ENCODE measurements at regions of chr12 and their contacts with region 1.

Region 1: DNA sequence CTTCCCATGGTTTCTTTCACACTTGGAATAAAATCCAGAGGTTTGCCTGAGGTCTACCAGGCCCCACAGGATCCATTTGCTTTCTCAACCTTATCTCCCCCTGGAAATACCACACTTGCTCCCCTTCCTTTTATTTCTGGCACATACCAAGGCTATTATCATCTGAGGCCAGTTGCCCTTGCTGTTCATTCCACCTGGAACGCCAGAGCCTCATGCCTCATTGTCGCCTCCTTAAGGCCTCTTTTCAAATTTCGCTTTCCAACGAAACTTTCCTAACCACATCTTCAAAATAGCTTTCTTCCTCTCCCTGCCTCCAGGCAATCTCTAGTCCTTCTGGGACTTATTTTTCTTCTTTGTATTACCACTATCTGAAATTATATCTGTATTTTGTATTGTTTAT is 11.2 kb upstream of the LRIG3 start:
- DNase-seq: no peak
- H3K4me3 ChIP-seq: no peak overlapping the region
- H3K27ac ChIP-seq: no peak overlapping the region
- H3K4me1 ChIP-seq: peaks cover 0 to 8% (median under 1%) of the 10 kb centered on the region in 4 donors
- H3K27me3 ChIP-seq: no peaks in the 10 kb centered on the region
- CTCF ChIP-seq: no peak
- EP300 ChIP-seq: no peak
- POLR2A ChIP-seq: no peak

Region 2: DNA sequence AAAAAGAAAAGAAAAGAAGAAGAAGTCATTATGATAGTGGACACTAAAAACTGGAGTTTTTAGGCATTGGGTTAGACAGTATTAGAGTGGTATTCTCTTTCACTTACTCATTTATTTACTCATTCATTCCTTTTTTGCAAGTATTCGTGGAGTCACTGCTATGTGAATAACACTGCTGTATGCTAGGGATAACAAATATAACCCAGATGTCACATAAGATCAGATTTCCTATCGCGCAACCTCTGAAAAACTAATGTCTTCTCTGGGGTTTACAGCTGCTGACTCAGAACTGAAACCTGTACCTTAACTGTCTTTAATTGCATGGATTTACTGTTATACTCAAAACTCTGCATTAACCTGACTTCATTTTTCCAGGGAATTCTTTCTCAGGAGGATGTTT is 364.9 kb before region 1 on chr12:
- in situ Hi-C with region 1: no loop called
- intact Hi-C with region 1: no loop called
- DNase-seq: no peak
- H3K4me3 ChIP-seq: no peak overlapping the region
- H3K27ac ChIP-seq: no peak overlapping the region
- H3K4me1 ChIP-seq: no peaks in the 10 kb centered on the region
- H3K27me3 ChIP-seq: no peaks in the 10 kb centered on the region
- CTCF ChIP-seq: no peak
- EP300 ChIP-seq: no peak
- POLR2A ChIP-seq: no peak

Region 3: GRCh38 chr12:58988643-58989344 is 57.3 kb after region 1 on chr12:
- in situ Hi-C with region 1: no loop called
- intact Hi-C with region 1: loop called (anchors 2 kb)
- DNase-seq: no peak
- H3K4me3 ChIP-seq: no peak overlapping the region
- H3K27ac ChIP-seq: no peak overlapping the region
- H3K4me1 ChIP-seq: no peaks in the 10 kb centered on the region
- H3K27me3 ChIP-seq: no peaks in the 10 kb centered on the region
- CTCF ChIP-seq: no peak
- EP300 ChIP-seq: no peak
- POLR2A ChIP-seq: no peak

Region 4: DNA sequence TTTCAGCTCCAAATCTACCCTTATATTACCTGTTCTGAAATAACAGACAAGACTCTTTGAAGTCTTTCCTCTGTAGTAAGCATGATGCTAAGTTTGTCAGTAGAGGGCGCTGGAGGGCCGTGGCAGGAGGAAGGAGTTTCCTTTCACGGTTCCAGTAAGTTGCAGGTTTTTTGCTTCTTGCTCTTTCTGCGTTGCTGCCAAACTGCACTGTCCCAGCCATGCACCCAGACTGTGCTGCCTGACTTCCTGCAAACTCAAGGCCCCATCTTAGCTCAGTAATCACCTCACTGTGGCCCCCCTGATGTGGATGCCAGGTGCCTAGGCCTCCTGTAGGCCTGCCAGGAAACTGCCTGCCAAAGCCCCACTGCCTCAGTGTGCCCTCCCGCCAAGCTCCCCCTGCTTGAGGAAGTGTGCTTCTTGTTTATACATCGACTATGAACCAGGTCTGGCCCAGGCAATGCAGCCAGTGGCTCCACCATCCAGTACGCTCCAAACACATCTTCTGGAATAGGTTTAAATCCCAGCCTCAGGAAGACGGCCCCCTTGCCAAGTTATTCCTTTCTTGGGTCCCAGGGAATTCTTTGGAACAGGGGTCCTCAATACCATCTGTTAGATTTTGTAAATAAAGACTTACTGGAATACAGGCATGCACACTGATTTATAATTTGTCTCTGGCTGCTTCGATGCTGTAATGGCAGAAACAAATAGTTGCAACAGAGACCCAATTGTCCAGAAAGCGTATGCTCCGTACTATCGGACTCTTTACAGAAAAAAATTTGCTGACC is 182.5 kb after region 1 on chr12:
- in situ Hi-C with region 1: no loop called
- intact Hi-C with region 1: no loop called
- DNase-seq: peak; percentile 78
- H3K4me3 ChIP-seq: no peak overlapping the region
- H3K27ac ChIP-seq: no peak overlapping the region
- H3K4me1 ChIP-seq: peaks cover 0 to 3% (median 1%) of the 10 kb centered on the region in 4 donors
- H3K27me3 ChIP-seq: no peaks in the 10 kb centered on the region
- CTCF ChIP-seq: peak; percentile 77 to 88 (median 78)
- EP300 ChIP-seq: no peak
- POLR2A ChIP-seq: no peak